ENCODE measurements at regions of chr4 and their contacts with region 1.

Region 1: DNA sequence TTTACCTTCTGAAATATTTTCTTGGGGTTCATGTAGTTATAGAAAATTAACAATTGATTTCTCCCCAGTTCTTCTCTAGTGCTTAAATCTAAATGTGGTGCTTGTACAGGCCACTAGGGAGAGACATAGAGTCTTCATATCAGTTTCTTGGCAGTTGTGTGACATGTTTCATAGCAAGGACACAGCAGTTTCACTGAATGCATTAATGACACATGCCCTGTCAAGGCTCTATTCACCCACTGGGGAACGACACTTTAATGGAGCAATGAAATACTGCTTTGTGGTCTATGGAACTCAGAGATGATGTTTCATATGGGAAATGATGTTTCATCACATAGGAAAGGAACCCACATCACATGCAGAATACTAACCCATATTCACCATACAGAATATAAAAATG is 2.8 kb downstream of the VEGFC start:
- DNase-seq: no peak
- H3K4me3 Mint-ChIP-seq: no peak overlapping the region
- H3K27ac Mint-ChIP-seq: no peak overlapping the region
- H3K4me1 Mint-ChIP-seq: peaks cover 11% of the 10 kb centered on the region
- H3K27me3 Mint-ChIP-seq: peaks cover 42% of the 10 kb centered on the region

Region 2: GRCh38 chr4:176377780-176378179 is 412.2 kb before region 1 on chr4:
- intact Hi-C with region 1: loop called (anchors 2 kb)
- DNase-seq: no peak
- H3K4me3 Mint-ChIP-seq: no peak overlapping the region
- H3K27ac Mint-ChIP-seq: no peak overlapping the region
- H3K4me1 Mint-ChIP-seq: no peaks in the 10 kb centered on the region
- H3K27me3 Mint-ChIP-seq: peaks cover 6% of the 10 kb centered on the region

Measured in activated T-helper 2 cell treated with anti-CD3 and anti-CD28 coated beads, Interferon-gamma antibody, Interleukin-2, Interleukin-4, amounts not matched to agents 10 μg/mL and 5 μg/mL and 100 μg/mL, durations not matched to agents 14 hours and 24 hours and 36 hours (primary cell).